ENCODE measurements at regions of chr4 and their contacts with region 1.

Region 1: DNA sequence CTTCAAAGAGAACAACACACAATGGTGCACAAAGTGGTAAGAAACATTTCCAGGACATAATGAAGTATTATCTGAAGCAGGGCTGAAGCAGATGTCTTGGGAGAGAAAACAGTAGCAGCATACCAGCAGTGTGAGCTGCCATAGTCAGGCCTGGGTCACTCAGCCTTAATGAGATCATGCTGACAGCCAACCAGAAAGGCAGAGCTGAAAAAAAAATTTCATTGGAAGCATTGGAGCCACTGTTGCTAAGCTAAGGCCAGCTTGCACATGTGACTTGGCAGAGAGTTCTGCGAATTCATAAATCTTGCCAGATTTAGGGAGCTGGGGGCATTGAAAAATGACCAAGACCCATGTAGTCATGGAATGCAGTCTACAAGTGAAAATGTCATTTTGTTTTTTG is 444.0 kb upstream of the PITX2 start:
- DNase-seq: peak; percentile 3
- H3K4me3 ChIP-seq: no peak overlapping the region
- H3K27ac ChIP-seq: no peak overlapping the region
- H3K4me1 ChIP-seq: peaks cover 3% of the 10 kb centered on the region
- H3K27me3 ChIP-seq: no peaks in the 10 kb centered on the region
- CTCF ChIP-seq: no peak

Region 2: GRCh38 chr4:111128327-111128726 is 61.4 kb after region 1 on chr4:
- CTCF ChIA-PET with region 1: interaction called, 13 read pairs
- dilution Hi-C with region 1: no loop called
- in situ Hi-C with region 1: no loop called
- intact Hi-C with region 1: no loop called
- DNase-seq: no peak
- H3K4me3 ChIP-seq: no peak overlapping the region
- H3K27ac ChIP-seq: no peak overlapping the region
- H3K4me1 ChIP-seq: no peaks in the 10 kb centered on the region
- H3K27me3 ChIP-seq: no peaks in the 10 kb centered on the region
- CTCF ChIP-seq: no peak